ENCODE measurements at regions of chr18 and their contacts with region 1.

Region 1: DNA sequence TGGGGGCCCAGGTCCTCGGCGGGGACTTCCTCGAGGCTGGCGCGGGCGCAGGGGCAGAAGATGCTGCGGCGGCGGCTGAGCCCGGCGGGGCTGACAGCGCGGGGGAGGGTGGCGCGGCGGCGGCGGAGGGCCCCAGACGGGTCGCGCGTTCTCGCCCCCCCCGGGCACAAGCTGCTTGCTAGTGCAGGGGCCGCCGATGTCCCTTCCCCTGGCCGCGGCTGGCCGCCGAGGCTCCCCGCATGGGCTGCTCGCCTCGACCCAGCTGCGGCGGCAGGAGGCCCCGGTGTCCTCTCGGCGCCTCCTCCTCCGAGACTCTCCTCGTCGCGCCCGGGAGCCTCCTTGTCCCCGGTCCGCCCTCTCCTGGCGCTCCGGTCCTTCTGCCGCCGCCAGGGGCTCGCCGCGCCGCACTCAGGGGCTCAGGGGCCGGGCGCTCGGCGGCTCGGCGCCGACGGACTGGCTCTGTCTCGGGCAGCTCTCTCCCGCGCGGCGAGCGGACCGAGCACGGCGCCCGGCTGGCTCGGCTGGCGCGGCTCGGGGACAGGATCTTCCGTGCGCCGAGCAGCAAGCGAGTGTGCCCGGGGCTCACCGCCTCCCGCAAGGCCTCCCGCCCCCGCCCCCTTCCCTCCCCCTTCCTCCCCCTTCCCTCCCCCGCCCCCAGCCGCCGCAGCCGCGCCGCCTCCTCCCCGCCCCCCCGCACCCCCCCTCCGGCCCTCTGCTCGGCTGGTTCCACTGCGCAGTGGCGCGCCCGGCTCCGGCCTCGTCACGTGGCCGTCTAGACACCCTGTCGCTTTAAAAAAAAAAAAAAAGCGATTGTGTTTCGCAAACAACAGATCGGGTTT is 902 bp upstream of the SMAD7 start:
- DNase-seq: peak in 34 of 35 experiments; percentile 41 to 89 (median 65)
- ATAC-seq: peak; percentile 46 to 58 (median 56)
- H3K4me3 ChIP-seq: peak overlapping the region; percentile 85 to 93
- H3K4me3 Mint-ChIP-seq: peak overlapping the region; percentile 85 to 97 (median 89)
- H3K27ac ChIP-seq: peak overlapping the region; percentile 96
- H3K27ac Mint-ChIP-seq: peak overlapping the region; percentile 97 to 99
- H3K4me1 ChIP-seq: peaks cover 13 to 52% of the 10 kb centered on the region in 2 experiments
- H3K4me1 Mint-ChIP-seq: peaks cover 44 to 53% (median 47%) of the 10 kb centered on the region in 3 donors
- H3K27me3 ChIP-seq: peaks cover 0 to 7% of the 10 kb centered on the region in 2 experiments
- H3K27me3 Mint-ChIP-seq: no peaks in the 10 kb centered on the region

Region 2: DNA sequence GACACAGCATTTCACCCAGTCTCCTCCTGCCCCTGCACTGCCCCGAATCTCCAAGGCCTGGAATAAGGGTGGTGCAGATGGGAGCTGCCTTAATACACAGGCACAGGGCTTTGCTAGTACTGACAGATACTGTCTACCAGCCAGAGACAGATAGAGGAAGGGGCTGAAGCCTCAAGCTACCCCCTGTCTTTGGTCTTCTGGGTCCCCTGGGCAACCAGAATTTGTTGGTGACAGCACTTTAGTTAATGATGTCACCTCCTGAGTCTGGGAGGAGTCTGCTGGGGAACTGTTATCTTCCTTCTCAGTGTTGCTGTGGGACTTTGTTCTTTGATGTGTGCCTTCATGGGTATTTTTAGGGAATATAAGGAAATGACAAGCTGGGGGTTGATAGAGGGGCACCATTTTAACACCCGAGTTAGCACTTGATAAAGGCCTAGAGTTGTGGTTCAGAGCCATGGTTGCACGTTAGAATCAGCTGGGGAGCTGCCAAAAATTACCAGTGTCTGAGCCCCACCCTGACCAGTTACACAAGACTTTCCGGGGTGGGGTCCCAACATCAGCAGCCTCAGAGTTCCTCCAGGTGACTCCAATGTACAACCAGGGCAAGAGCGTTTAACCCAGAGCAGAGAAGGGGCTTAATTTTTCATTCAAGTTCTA is 137.7 kb before region 1 on chr18:
- CTCF ChIA-PET with region 1: interaction called in 1 of 2 experiments, 6 read pairs
- POLR2A ChIA-PET with region 1: interaction called in 1 of 2 experiments, 10 read pairs
- DNase-seq: peak in 34 of 35 experiments; percentile 20 to 86 (median 56)
- ATAC-seq: peak; percentile 76 to 83 (median 80)
- H3K4me3 ChIP-seq: no peak overlapping the region
- H3K4me3 Mint-ChIP-seq: peak overlapping the region; percentile 1 to 35 (median 32)
- H3K27ac ChIP-seq: peak overlapping the region; percentile 98
- H3K27ac Mint-ChIP-seq: peak overlapping the region; percentile 89 to 93
- H3K4me1 ChIP-seq: peaks cover 2 to 53% of the 10 kb centered on the region in 2 experiments
- H3K4me1 Mint-ChIP-seq: peaks cover 28 to 55% (median 34%) of the 10 kb centered on the region in 3 donors
- H3K27me3 ChIP-seq: no peaks in the 10 kb centered on the region
- H3K27me3 Mint-ChIP-seq: no peaks in the 10 kb centered on the region

Region 3: GRCh38 chr18:48928787-48929186 is 22.9 kb before region 1 on chr18:
- CTCF ChIA-PET with region 1: interaction called, 3 to 7 read pairs
- POLR2A ChIA-PET with region 1: interaction called, 8 to 17 read pairs
- DNase-seq: peak; percentile 37 to 87 (median 73)
- ATAC-seq: peak; percentile 91 to 96 (median 94)
- H3K4me3 ChIP-seq: peak overlapping the region in 1 of 2 donors; percentile 49
- H3K4me3 Mint-ChIP-seq: peak overlapping the region; percentile 58 to 73 (median 69)
- H3K27ac ChIP-seq: peak overlapping the region; percentile 22
- H3K27ac Mint-ChIP-seq: peak overlapping the region; percentile 65 to 81
- H3K4me1 ChIP-seq: peaks cover 65 to 97% of the 10 kb centered on the region in 2 experiments
- H3K4me1 Mint-ChIP-seq: peaks cover 94 to 98% (median 97%) of the 10 kb centered on the region in 3 donors
- H3K27me3 ChIP-seq: no peaks in the 10 kb centered on the region
- H3K27me3 Mint-ChIP-seq: no peaks in the 10 kb centered on the region

Region 4: DNA sequence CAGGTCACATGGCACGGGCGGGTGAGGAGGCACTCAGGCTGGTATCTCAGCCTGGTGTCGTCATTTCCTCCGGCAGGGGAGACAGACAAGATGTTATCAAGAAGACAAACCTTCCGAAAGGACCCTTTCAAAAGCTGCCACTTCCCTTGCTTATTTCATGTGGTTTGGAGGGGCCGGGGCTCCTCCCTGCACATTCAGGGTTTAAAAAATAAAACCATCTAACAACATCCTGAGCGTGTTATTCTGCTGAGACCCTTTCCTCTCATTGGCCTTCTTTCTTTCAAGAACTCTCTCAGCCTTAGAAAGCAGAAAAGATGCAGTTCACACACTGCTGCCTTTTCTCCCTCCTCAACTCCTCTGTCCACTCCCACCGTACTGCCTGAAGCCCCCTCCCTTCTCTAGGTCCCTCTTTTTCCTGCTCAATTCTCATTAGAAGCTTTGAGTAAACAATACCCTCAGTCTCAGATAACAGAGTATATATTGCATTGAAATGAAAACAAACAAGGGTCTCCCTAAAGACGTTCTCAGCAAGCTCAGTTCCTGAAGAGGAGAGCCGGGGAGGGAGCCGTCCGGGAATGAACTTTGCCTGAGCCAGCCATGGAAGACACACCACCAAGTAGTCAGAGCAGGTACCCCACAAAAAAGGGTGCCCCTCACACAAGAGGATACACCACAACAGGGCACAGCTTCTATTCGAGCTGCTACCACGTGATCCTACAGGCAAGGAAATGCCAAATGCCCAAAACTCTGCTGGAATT is 10.6 kb before region 1 on chr18:
- CTCF ChIA-PET with region 1: interaction called in 1 of 2 experiments, 9 read pairs
- POLR2A ChIA-PET with region 1: interaction called, 5 to 22 read pairs
- DNase-seq: peak; percentile 63 to 97 (median 91)
- ATAC-seq: peak; percentile 88 to 89 (median 89)
- H3K4me3 ChIP-seq: peak overlapping the region; percentile 41 to 46
- H3K4me3 Mint-ChIP-seq: peak overlapping the region; percentile 74 to 87 (median 81)
- H3K27ac ChIP-seq: peak overlapping the region; percentile 75
- H3K27ac Mint-ChIP-seq: peak overlapping the region; percentile 87 to 93
- H3K4me1 ChIP-seq: peaks cover 68 to 99% of the 10 kb centered on the region in 2 experiments
- H3K4me1 Mint-ChIP-seq: peaks cover 92 to 97% (median 96%) of the 10 kb centered on the region in 3 donors
- H3K27me3 ChIP-seq: no peaks in the 10 kb centered on the region
- H3K27me3 Mint-ChIP-seq: no peaks in the 10 kb centered on the region

Region 5: GRCh38 chr18:48997985-48998831 is 46.5 kb after region 1 on chr18:
- CTCF ChIA-PET with region 1: no interaction called
- POLR2A ChIA-PET with region 1: interaction called in 1 of 2 experiments, 14 read pairs
- DNase-seq: no peak
- ATAC-seq: no peak
- H3K4me3 ChIP-seq: no peak overlapping the region
- H3K4me3 Mint-ChIP-seq: no peak overlapping the region
- H3K27ac ChIP-seq: no peak overlapping the region
- H3K27ac Mint-ChIP-seq: no peak overlapping the region
- H3K4me1 ChIP-seq: peaks cover 11 to 27% of the 10 kb centered on the region in 2 experiments
- H3K4me1 Mint-ChIP-seq: peaks cover 20 to 26% (median 23%) of the 10 kb centered on the region in 3 donors
- H3K27me3 ChIP-seq: peaks cover 0 to 13% of the 10 kb centered on the region in 2 experiments
- H3K27me3 Mint-ChIP-seq: peaks cover 0 to 2% of the 10 kb centered on the region in 2 donors

Measured in T-cell (primary cell).